GM10248 (cell line): ENCODE measurements at regions of chr1 and their contacts with region 1.

Region 1: GRCh38 chr1:179369751-179370341 is 4.1 kb downstream of the AXDND1 start:
- DNase-seq: peak; percentile 64
- CTCF ChIP-seq: peak; percentile 71

Region 2: DNA sequence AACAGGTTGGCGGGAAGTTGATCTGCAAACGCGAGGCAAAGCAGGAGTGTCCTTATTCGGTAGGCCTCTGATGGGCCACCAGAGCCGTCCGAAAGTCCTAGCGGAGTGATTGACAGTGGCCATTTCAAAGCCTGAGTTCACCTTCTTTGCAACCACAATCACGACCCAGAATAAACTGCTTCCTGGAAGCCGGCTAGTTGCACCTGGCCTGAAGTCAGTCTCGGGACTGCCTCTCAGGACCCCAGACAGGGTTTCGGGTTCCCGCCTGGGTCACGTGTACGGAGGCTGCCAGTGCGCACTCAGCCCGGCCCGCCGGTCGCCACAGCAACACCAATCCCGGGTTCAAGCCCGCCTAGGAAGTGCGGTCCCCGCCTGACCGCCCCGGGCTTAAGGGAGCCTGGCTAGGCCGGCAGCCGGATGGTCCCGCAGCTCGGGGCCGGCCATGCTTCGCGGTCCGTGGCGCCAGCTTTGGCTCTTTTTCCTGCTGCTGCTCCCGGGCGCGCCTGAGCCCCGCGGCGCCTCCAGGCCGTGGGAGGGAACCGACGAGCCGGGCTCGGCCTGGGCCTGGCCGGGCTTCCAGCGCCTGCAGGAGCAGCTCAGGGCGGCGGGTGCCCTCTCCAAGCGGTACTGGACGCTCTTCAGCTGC is 288.0 kb before region 1 on chr1 and contains the start of gene TOR3A:
- CTCF ChIA-PET with region 1: interaction called, 89 read pairs
- POLR2A ChIA-PET with region 1: no interaction called
- DNase-seq: peak; percentile 96
- CTCF ChIP-seq: no peak

Region 3: GRCh38 chr1:179251675-179252074 is 118.2 kb before region 1 on chr1:
- CTCF ChIA-PET with region 1: interaction called, 11 read pairs
- POLR2A ChIA-PET with region 1: no interaction called
- DNase-seq: no peak
- CTCF ChIP-seq: peak; percentile 43